ENCODE measurements at regions of chr14 and their contacts with region 1.

Region 1: GRCh38 chr14:64620910-64621309 is 71.1 kb downstream of the PPP1R36 start:
- DNase-seq: no peak
- H3K4me3 ChIP-seq: no peak overlapping the region
- H3K27ac ChIP-seq: no peak overlapping the region
- H3K4me1 ChIP-seq: no peaks in the 10 kb centered on the region
- CTCF ChIP-seq: no peak

Region 2: GRCh38 chr14:64363265-64363846 is 257.6 kb before region 1 on chr14:
- CTCF ChIA-PET with region 1: no interaction called
- POLR2A ChIA-PET with region 1: no interaction called
- intact Hi-C with region 1: no loop called
- DNase-seq: no peak
- H3K4me3 ChIP-seq: no peak overlapping the region
- H3K27ac ChIP-seq: no peak overlapping the region
- H3K4me1 ChIP-seq: no peaks in the 10 kb centered on the region
- CTCF ChIP-seq: no peak

Region 3: DNA sequence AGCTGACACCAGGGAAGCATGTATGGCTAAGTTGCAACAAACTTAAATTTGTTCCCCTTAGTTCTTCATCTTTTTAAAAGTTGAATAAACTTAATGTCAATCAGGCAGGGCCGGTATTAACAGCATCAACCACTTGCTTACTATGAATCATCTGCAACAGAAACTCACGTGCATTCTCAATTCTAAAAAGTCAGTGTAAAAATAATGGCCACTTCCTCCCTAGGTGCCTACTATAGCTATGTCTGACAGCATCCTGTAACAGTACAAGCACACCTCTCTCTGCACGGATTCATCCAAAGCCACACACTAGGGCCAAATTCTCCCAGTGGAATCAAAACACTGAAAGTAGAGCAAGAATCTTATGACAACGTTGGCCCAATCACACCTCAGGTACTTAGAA is 22.5 kb before region 1 on chr14:
- CTCF ChIA-PET with region 1: no interaction called
- POLR2A ChIA-PET with region 1: no interaction called
- intact Hi-C with region 1: loop called (anchors 1 kb)
- DNase-seq: no peak
- H3K4me3 ChIP-seq: no peak overlapping the region
- H3K27ac ChIP-seq: no peak overlapping the region
- H3K4me1 ChIP-seq: no peaks in the 10 kb centered on the region
- CTCF ChIP-seq: no peak

Region 4: GRCh38 chr14:64632056-64632455 is 11.1 kb after region 1 on chr14:
- CTCF ChIA-PET with region 1: no interaction called
- POLR2A ChIA-PET with region 1: no interaction called
- intact Hi-C with region 1: no loop called
- DNase-seq: no peak
- H3K4me3 ChIP-seq: no peak overlapping the region
- H3K27ac ChIP-seq: no peak overlapping the region
- H3K4me1 ChIP-seq: no peaks in the 10 kb centered on the region
- CTCF ChIP-seq: no peak